ENCODE measurements at regions of chr6 and their contacts with region 1.

Region 1: DNA sequence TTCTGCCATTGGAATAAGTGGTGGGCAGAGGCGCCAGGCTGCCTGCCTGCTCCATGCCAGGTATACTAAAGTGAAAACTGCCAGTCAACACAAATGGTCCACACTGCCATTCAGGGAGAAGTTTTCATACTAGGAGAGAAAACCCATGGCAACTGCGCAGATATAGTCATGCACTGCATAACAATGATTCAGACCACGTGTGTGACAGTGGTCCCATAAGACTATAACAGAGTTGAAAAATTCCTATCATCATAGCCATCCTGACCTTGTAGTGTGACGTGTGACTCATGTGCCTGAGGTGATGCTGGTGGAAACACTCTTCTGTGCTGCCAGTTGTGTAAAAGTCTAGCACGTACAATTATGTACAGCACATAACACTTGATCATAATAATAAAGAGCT is 25.1 kb downstream of the ZC3H12D start:
- DNase-seq: no peak
- ATAC-seq: no peak

Region 2: GRCh38 chr6:149423964-149424440 is 35.8 kb before region 1 on chr6:
- intact Hi-C with region 1: no loop called
- DNase-seq: no peak
- ATAC-seq: no peak

Region 3: GRCh38 chr6:149499066-149499465 is 39.3 kb after region 1 on chr6:
- intact Hi-C with region 1: loop called (anchors 5 kb)
- DNase-seq: no peak
- ATAC-seq: no peak

Measured in Right ventricle myocardium inferior (tissue), 1 donor.